H1 (cell line): ENCODE measurements at regions of chr6 and their contacts with region 1.

Region 1: DNA sequence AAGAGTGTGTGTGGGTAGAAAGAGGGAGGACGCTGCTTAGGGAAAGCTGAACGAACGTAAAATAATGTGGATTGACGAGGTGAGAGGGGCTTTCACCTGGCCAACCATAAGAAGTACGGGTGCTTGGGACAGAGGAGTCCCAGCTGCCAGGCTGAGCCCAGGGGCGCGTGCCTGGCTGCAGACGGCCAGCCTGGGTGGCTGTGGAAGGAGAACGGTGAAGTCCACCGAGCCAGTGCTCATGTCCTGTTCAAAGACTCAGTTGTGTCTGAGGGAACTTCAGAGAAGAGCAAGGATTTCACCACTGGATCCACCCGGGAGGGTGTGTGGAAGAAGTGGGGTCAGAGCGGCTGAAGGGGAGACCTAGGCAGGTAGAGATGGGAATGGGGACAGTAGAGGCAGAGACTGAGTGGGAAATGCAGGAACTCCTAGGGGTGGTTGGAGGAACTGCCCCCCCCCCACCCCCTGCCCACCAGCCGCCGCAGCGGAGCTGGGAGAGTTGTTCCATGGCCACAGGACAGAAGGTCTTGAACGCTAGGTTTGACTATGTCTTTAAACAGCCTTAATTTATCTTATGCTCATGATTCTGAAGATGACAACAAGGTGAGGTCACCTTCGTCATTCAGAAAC is 68.1 kb upstream of the TBXT start:
- DNase-seq: no peak
- H3K4me3 ChIP-seq: no peak overlapping the region
- H3K27ac ChIP-seq: no peak overlapping the region
- H3K4me1 ChIP-seq: no peaks in the 10 kb centered on the region
- H3K27me3 ChIP-seq: no peaks in the 10 kb centered on the region; a peak in 2 of 7 replicates
- CTCF ChIP-seq: no peak
- EP300 ChIP-seq: no peak
- POLR2A ChIP-seq: no peak
- RAD21 ChIP-seq: no peak

Region 2: DNA sequence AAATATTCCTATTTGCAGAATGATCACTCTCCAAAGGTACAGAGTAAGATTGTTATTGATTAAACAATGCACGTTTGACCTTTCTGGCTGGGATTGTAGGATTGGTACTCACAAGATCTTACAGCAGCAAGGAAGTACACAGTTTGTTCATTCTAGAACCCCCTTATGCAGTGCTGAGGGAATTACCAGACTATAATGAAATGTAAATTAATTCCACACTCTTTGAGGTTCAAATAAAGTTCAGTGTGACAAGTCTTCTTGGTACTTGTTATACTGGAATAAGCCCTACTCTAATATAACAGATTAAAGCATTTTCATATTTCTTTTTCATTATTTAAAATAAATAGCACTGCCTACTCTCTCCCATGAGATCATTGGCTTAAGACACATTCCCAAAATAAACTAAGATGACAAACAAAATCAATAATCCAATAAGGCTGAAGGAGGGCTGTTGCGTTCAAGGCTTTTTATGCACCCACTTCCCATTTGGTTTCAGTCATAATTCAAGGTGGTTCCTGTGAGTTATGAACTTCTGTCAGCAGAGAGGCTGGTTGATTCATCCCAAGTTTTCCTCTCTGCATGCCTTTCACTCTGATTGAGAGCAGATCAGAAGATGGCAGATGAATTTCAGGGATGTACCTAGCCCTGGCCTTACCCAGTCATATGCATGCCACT is 1807.9 kb before region 1 on chr6:
- CTCF ChIA-PET with region 1: no interaction called
- POLR2A ChIA-PET with region 1: no interaction called
- DNase-seq: no peak
- H3K4me3 ChIP-seq: no peak overlapping the region
- H3K27ac ChIP-seq: no peak overlapping the region
- H3K4me1 ChIP-seq: 0 out of 7 replicates have a peak, but pooled peaks cover 0 to 2% (median under 1%) of the 10 kb centered on the region in 4 experiments
- H3K27me3 ChIP-seq: no peaks in the 10 kb centered on the region
- CTCF ChIP-seq: no peak
- EP300 ChIP-seq: no peak
- POLR2A ChIP-seq: no peak
- RAD21 ChIP-seq: no peak

Region 3: GRCh38 chr6:166221040-166221439 is 14.7 kb before region 1 on chr6:
- CTCF ChIA-PET with region 1: interaction called, 11 read pairs
- POLR2A ChIA-PET with region 1: no interaction called
- DNase-seq: no peak
- H3K4me3 ChIP-seq: no peak overlapping the region
- H3K27ac ChIP-seq: no peak overlapping the region
- H3K4me1 ChIP-seq: peaks cover 0 to 3% (median 0%) of the 10 kb centered on the region in 4 experiments; a peak in 1 of 7 replicates
- H3K27me3 ChIP-seq: no peaks in the 10 kb centered on the region
- CTCF ChIP-seq: no peak
- EP300 ChIP-seq: no peak
- POLR2A ChIP-seq: no peak
- RAD21 ChIP-seq: no peak